Naive thymus-derived CD8-positive, alpha-beta T cell (primary cell): ENCODE measurements at regions of chr7 and their contacts with region 1.

Region 1: DNA sequence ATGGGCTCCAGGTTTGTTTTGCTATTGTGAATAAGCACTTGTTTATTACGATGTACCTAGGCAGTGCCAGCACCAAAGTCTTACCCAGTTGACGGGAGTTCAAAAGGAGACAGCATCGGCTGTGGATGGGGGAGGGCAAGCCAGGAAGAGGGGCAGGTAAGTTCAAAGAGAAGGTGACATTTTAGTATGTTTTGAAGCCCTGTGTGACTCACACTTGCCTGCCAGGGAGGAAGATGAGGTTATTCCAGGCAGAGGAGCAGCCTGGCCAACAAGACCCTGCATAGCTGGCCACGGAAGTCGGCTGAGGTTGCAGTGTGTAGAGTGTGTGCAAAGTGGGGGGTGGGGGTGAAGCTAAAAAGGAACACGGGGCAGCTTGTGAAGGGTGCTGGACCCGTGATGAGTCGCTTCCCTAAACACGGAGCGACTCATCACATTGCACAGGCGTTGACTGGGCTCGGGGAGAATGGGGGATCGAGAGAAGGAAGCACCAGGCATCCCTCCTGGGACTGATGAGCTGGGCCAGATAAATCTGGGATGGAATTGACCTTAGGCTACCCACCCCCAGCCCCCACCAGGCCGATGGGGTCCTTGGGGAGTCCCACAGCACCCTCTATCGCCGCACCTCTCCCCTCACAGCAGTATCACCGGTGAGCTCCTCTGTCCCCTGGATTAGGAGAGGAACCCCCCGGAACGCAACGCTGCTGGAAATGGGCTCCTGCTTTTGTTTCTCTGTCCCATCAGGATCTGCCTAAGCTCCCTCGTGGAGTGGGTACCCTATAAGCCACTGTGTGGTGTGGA is 97.9 kb upstream of the IKZF1 start:
- DNase-seq: peak; percentile 34 to 91 (median 71)
- ATAC-seq: peak; percentile 74 to 83
- H3K4me3 Mint-ChIP-seq: peak overlapping the region; percentile 72 to 88 (median 84)
- H3K27ac Mint-ChIP-seq: peak overlapping the region; percentile 93 to 100 (median 96)
- H3K4me1 Mint-ChIP-seq: peaks cover 53 to 81% (median 76%) of the 10 kb centered on the region in 4 donors
- H3K27me3 Mint-ChIP-seq: no peaks in the 10 kb centered on the region

Region 2: DNA sequence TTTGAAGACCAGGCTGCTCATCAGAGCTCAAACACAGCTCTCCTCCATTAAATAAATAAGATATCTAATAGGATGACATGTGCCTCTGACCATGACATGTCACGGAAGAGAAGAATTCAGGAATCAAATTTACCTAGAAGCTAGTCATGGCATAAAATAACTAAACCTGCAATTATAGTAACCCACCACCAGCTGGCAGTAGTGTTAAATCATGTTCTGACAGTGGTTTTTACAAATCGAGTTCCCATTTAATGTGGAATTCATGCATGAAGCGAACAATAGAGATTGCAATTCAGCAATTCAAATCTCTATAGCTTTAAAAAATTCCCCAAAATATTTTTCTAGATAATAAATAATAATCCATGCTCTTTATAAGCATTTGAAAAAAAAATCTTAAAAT is 23.3 kb after region 1 on chr7:
- POLR2A ChIA-PET with region 1: interaction called, 20 read pairs
- DNase-seq: peak in 2 of 10 donors; percentile 23 to 25
- ATAC-seq: no peak
- H3K4me3 Mint-ChIP-seq: no peak overlapping the region
- H3K27ac Mint-ChIP-seq: no peak overlapping the region
- H3K4me1 Mint-ChIP-seq: peaks cover 20 to 40% (median 37%) of the 10 kb centered on the region in 4 donors
- H3K27me3 Mint-ChIP-seq: no peaks in the 10 kb centered on the region

Region 3: GRCh38 chr7:50349963-50350944 is 143.6 kb after region 1 on chr7:
- POLR2A ChIA-PET with region 1: interaction called, 23 read pairs
- DNase-seq: peak in 6 of 10 donors; percentile 40 to 61 (median 53)
- ATAC-seq: peak; percentile 49 to 56
- H3K4me3 Mint-ChIP-seq: peak overlapping the region; percentile 52 to 91 (median 78)
- H3K27ac Mint-ChIP-seq: peak overlapping the region in 9 of 10 donors; percentile 94 to 100 (median 97)
- H3K4me1 Mint-ChIP-seq: peaks cover 60 to 99% (median 98%) of the 10 kb centered on the region in 4 donors
- H3K27me3 Mint-ChIP-seq: peaks cover 0 to 2% (median 0%) of the 10 kb centered on the region in 5 donors

Region 4: GRCh38 chr7:50369143-50370026 is 162.7 kb after region 1 on chr7:
- POLR2A ChIA-PET with region 1: interaction called, 93 read pairs
- DNase-seq: peak in 8 of 10 donors; percentile 49 to 86 (median 72)
- ATAC-seq: peak; percentile 44 to 66
- H3K4me3 Mint-ChIP-seq: peak overlapping the region in 9 of 10 donors; percentile 45 to 82 (median 61)
- H3K27ac Mint-ChIP-seq: peak overlapping the region in 9 of 10 donors; percentile 37 to 100 (median 89)
- H3K4me1 Mint-ChIP-seq: peaks cover 42 to 99% (median 96%) of the 10 kb centered on the region in 4 donors
- H3K27me3 Mint-ChIP-seq: no peaks in the 10 kb centered on the region